ENCODE measurements at regions of chr3 and their contacts with region 1.

Region 1: GRCh38 chr3:179604321-179605078 is at the starts of genes MRPL47 and NDUFB5:
- DNase-seq: peak; percentile 92 to 99 (median 97)

Region 2: DNA sequence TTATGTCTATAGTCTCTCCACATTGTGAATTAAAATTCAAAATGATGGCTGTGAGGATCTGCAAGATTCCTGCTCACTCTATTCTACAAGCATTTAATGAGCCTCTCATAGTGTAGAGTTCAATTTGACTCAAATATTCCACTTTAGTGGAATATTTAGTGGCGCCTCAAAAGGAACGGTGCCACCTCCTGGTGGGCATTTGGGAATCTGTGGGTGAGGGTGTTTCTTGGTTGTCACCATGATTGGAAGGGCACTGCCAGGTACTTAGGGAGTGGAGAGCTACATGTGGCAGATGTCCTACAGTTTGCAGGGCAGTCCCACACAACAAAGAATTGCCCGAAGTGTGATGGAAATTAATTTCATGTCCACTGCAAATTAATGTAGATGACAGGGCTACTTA is 332.1 kb before region 1 on chr3:
- intact Hi-C with region 1: no loop called
- DNase-seq: no peak

Region 3: GRCh38 chr3:179651687-179652446 is 47.4 kb after region 1 on chr3:
- intact Hi-C with region 1: loop called (anchors 2 kb)
- DNase-seq: peak in 13 of 42 donors; percentile 5 to 52 (median 25)

Region 4: GRCh38 chr3:179671747-179672223 is 67.3 kb after region 1 on chr3:
- intact Hi-C with region 1: no loop called
- DNase-seq: no peak